ENCODE measurements at regions of chr12 and their contacts with region 1.

Region 1: DNA sequence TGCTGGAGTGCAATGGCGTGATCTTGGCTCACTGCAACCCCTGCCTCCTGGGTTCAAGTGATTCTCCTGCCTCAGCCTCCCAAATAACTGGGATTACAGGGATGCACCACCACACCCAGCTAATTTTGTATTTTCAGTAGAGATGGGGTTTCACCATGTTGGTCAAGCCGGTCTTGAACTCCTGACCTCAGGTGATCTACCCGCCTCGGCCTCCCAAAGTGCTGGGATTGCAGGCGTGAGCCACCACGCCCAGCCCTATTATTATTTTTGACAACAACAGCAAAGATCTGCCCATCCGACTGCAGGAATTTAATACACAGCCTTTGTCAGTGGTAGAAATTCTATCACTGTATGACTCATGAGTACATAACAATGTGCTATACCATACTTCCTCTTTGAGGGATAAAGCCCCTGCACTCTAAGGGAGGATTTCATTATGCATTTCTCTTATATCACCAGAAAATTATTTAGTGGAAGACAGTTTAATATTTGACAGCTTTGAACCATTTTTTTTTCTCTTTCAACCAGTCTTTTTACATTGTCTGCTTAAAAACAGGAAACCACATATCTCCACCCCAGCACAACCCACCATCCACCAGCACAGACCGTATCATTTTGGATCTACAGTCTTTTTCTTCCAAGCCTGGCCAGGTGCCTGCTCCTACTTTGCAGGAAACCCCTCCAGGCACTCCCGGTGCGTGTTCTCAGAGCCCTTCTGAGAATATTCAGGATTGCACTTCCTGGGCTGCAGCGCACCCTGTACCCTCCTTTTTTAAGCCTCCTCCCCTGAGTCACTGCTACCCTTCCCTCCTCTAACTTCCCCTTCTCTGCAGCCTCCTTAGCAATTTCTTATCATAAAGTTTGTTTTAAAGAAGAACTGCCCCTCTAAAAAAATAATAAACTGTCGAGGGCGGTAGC is 594 bp downstream of the ARHGDIB start:
- DNase-seq: peak; percentile 72 to 78 (median 76)
- H3K4me3 ChIP-seq: peak overlapping the region; percentile 77 to 90
- H3K4me3 Mint-ChIP-seq: peak overlapping the region; percentile 96 to 100 (median 99)
- H3K27ac ChIP-seq: peak overlapping the region; percentile 92
- H3K27ac Mint-ChIP-seq: peak overlapping the region; percentile 97 to 99 (median 98)
- H3K4me1 ChIP-seq: peaks cover 64% of the 10 kb centered on the region
- H3K4me1 Mint-ChIP-seq: peaks cover 33 to 89% (median 48%) of the 10 kb centered on the region in 4 donors
- H3K27me3 ChIP-seq: no peaks in the 10 kb centered on the region
- H3K27me3 Mint-ChIP-seq: no peaks in the 10 kb centered on the region

Region 2: DNA sequence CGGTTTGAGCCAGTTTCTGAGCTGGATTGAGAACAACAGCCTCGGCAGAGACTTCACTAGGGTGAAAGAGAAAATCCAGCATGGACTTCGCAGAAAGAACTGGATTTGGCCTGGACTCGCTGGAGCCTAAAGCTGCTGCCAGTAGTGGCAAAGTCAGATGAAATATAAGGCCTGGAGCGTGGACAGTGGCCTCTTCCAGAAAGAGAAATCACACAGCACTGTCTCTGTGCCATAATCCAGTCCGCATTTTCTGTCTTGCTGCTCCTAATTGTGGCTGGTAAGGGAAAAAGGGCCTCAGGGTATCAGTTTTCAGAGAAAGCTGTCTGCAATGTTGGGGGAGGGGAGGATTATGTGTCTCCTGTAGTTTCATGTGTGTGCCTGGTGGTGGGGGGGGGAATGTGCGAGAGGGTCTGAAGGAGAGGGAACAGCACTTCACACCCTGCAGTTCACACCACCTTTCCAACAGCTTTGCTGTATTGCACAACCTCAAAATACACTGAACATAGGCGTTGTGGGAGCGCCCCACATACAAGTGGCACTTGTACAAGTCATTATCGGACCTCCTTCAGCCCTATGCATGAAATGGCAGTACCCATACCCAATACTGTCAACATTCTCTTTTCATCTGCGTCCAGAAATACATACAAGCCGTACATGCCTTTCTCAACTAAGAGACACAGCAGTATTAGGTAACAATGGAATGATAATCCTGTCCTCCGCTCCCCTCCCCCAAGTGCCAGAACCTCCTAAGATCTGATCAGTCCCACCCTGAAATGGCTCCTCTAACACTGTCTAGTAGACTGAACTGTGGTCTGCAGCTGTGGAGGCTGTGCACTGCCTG is 702.9 kb before region 1 on chr12:
- CTCF ChIA-PET with region 1: no interaction called
- POLR2A ChIA-PET with region 1: interaction called, 3 read pairs
- intact Hi-C with region 1: loop called (anchors 1 kb)
- DNase-seq: peak; percentile 81 to 92 (median 84)
- H3K4me3 ChIP-seq: peak overlapping the region; percentile 1 to 31
- H3K4me3 Mint-ChIP-seq: peak overlapping the region; percentile 75 to 91 (median 84)
- H3K27ac ChIP-seq: peak overlapping the region; percentile 49
- H3K27ac Mint-ChIP-seq: peak overlapping the region; percentile 95 to 99 (median 98)
- H3K4me1 ChIP-seq: peaks cover 44% of the 10 kb centered on the region
- H3K4me1 Mint-ChIP-seq: peaks cover 35 to 57% (median 42%) of the 10 kb centered on the region in 4 donors
- H3K27me3 ChIP-seq: no peaks in the 10 kb centered on the region
- H3K27me3 Mint-ChIP-seq: no peaks in the 10 kb centered on the region

Region 3: DNA sequence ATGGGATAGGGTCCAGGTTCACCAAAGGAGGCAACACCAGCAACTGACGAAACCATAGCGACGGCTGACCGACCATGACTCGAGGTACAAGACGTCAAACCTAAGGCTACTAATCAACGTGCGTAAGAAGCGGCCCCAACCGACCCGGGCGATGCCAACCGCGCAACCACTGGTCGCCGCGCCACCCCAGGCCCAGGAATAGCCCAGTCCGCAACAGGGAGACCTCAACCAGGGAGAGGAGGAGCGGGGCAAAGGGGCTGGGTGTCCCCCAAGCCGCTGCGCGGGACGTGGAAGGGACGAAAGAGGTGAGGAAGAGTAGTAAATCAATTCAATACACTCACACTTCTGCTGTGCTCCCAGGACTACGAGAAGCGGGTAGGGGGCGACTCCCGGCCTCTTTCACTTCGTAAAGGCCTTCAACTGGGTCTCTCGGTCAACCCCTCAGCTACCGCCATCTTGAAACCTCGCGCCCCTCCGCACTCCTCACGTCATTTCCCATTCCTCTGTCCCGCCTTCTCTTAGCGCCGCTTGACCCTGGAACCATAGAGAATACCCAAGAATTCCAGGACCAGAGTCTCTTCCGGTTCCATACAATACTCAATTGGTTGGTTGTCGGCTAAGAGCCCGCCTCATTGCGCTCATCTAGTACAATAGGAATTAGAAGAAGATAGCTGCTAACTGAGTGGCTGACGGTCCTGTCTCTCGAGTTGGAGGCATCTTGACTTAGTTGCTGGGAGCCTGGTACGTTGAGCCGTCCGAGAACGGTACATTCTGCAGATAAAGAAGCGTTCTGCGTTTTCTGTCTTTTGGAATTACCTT is 157.6 kb before region 1 on chr12 and contains the starts of genes C12orf60 and WBP11:
- CTCF ChIA-PET with region 1: interaction called, 3 read pairs
- POLR2A ChIA-PET with region 1: interaction called, 16 read pairs
- intact Hi-C with region 1: loop called (anchors 1 kb)
- DNase-seq: peak; percentile 89 to 96 (median 94)
- H3K4me3 ChIP-seq: peak within 1 kb of the TSS; percentile 66 to 89
- H3K4me3 Mint-ChIP-seq: no peak within 1 kb of the TSS
- H3K27ac ChIP-seq: peak within 1 kb of the TSS; percentile 91
- H3K27ac Mint-ChIP-seq: no peak within 1 kb of the TSS
- H3K4me1 ChIP-seq: peaks cover 39% of the 10 kb centered on the region
- H3K4me1 Mint-ChIP-seq: peaks cover 4 to 32% (median 13%) of the 10 kb centered on the region in 4 donors
- H3K27me3 ChIP-seq: no peaks in the 10 kb centered on the region
- H3K27me3 Mint-ChIP-seq: no peaks in the 10 kb centered on the region
- total RNA-seq, gene C12orf60: 1.3 to 1.4 TPM
- total RNA-seq, gene WBP11: 83.7 to 83.8 TPM

Region 4: DNA sequence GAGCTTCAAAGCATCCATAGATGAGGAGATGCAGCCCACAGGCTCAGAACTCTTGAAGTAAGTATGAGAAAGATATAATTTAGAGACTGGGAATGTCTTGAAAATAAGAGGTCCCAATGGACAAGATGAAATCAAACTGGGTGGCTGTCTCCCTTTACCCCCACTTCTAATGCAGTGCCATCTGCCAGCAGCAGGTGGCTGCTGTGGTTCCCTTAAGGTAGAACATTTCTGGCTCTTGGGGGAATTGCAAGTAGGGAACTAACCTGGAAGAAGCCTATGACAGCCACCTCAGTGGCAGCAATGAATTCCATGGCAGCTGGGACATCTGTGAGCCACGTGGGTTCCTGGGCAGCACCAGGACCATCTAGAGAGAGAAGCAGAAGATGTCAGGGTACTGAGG is 23.1 kb before region 1 on chr12:
- CTCF ChIA-PET with region 1: interaction called, 12 read pairs
- POLR2A ChIA-PET with region 1: interaction called, 82 read pairs
- intact Hi-C with region 1: loop called (anchors 1 kb)
- DNase-seq: peak in 1 of 5 donors; percentile 45
- H3K4me3 ChIP-seq: no peak overlapping the region
- H3K4me3 Mint-ChIP-seq: peak overlapping the region in 3 of 8 donors; percentile 7 to 20 (median 13)
- H3K27ac ChIP-seq: no peak overlapping the region
- H3K27ac Mint-ChIP-seq: peak overlapping the region; percentile 6 to 82 (median 65)
- H3K4me1 ChIP-seq: peaks cover 24% of the 10 kb centered on the region
- H3K4me1 Mint-ChIP-seq: peaks cover 33 to 59% (median 48%) of the 10 kb centered on the region in 4 donors
- H3K27me3 ChIP-seq: no peaks in the 10 kb centered on the region
- H3K27me3 Mint-ChIP-seq: no peaks in the 10 kb centered on the region

Region 5: GRCh38 chr12:14972816-14973215 is 12.0 kb after region 1 on chr12 and contains the start of gene PDE6H:
- CTCF ChIA-PET with region 1: interaction called, 3 read pairs
- POLR2A ChIA-PET with region 1: interaction called, 17 read pairs
- intact Hi-C with region 1: no loop called
- DNase-seq: no peak
- H3K4me3 ChIP-seq: no peak within 1 kb of the TSS
- H3K4me3 Mint-ChIP-seq: peak within 1 kb of the TSS in 1 of 8 donors; percentile 6
- H3K27ac ChIP-seq: no peak within 1 kb of the TSS
- H3K27ac Mint-ChIP-seq: peak within 1 kb of the TSS in 2 of 7 donors; percentile 22 to 38
- H3K4me1 ChIP-seq: no peaks in the 10 kb centered on the region
- H3K4me1 Mint-ChIP-seq: peaks cover 10 to 37% (median 24%) of the 10 kb centered on the region in 4 donors
- H3K27me3 ChIP-seq: no peaks in the 10 kb centered on the region
- H3K27me3 Mint-ChIP-seq: no peaks in the 10 kb centered on the region
- total RNA-seq, gene PDE6H: not detected

Region 6: DNA sequence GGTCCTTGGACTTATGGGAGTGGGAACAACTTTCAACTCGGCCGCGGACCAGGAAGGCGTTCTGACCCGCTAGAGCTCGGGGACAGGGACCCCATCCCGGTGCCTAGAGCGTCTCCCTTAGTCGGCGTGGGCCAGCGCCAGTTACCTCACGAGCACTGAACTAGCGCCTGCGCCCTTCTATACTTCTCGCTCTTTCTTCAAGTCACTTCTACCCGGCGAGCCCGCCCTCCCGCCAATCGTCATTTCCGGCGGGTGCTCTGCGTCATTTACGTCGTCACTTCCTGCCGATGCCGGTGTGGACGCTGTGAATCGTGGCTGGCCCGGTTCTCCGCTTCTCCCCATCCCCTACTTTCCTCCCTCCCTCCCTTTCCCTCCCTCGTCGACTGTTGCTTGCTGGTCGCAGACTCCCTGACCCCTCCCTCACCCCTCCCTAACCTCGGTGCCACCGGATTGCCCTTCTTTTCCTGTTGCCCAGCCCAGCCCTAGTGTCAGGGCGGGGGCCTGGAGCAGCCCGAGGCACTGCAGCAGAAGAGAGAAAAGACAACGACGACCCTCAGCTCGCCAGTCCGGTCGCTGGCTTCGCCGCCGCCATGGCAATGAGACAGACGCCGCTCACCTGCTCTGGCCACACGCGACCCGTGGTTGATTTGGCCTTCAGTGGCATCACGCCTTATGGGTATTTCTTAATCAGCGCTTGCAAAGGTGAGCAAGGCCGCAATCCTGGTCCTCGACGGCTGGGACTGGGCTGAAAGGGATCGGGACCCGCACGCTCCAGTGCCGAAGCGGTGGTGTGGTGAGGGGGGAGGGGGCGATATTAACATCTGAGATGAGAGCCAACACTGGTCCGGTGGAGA is 921.5 kb after region 1 on chr12 and contains the start of gene STRAP:
- CTCF ChIA-PET with region 1: no interaction called
- POLR2A ChIA-PET with region 1: no interaction called
- intact Hi-C with region 1: loop called (anchors 10 kb)
- DNase-seq: peak; percentile 96 to 97 (median 97)
- H3K4me3 ChIP-seq: peak within 1 kb of the TSS; percentile 90 to 98
- H3K4me3 Mint-ChIP-seq: peak within 1 kb of the TSS; percentile 96 to 99 (median 98)
- H3K27ac ChIP-seq: peak within 1 kb of the TSS; percentile 95
- H3K27ac Mint-ChIP-seq: peak within 1 kb of the TSS; percentile 99 to 100 (median 100)
- H3K4me1 ChIP-seq: peaks cover 51% of the 10 kb centered on the region
- H3K4me1 Mint-ChIP-seq: peaks cover 38 to 66% (median 53%) of the 10 kb centered on the region in 4 donors
- H3K27me3 ChIP-seq: no peaks in the 10 kb centered on the region
- H3K27me3 Mint-ChIP-seq: no peaks in the 10 kb centered on the region
- total RNA-seq, gene STRAP: 46.1 to 49.1 TPM

Measured in CD4-positive, alpha-beta memory T cell (primary cell).